ENCODE measurements at regions of chr2 and their contacts with region 1.

Region 1: GRCh38 chr2:112665113-112665780 is 19.5 kb downstream of the SLC20A1 start:
- DNase-seq: no peak
- ATAC-seq: no peak
- H3K4me3 Mint-ChIP-seq: no peak overlapping the region
- H3K27ac Mint-ChIP-seq: peak overlapping the region in 8 of 10 donors; percentile 3 to 84 (median 18)
- H3K4me1 Mint-ChIP-seq: peaks cover 7 to 16% (median 16%) of the 10 kb centered on the region in 4 donors
- H3K27me3 Mint-ChIP-seq: no peaks in the 10 kb centered on the region

Region 2: DNA sequence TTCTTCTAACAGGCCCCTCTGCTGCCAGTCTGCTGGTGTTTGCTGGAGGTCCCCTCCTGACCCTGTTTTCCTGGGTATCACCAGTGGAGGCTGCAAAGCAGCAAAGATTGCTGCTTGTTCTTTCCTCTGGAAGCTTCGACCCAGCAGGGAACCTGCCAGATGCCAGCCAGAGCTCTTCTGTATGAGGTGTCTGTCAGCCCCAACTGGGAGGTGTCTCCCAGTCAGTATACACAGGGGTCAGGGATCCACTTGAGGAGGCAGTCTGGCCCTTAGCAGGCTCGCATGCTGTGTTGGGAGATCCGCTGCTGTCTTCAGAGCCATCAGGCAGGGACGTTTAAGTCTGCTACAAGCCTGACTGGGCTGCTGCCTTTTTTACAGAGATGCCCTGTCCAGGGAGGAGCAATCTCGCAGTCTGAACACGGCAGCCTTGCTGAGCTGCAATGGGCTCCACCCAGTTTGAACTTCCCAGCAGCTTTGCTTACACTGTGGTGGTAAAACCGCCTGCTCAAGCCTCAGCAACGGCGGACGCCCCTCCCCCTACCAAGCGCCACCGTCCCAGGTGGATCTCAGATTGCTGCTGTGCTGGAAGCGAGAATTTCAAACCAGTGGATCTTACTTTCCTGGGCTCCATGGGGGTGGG is 50.9 kb before region 1 on chr2:
- POLR2A ChIA-PET with region 1: no interaction called
- DNase-seq: no peak
- ATAC-seq: no peak
- H3K4me3 Mint-ChIP-seq: no peak overlapping the region
- H3K27ac Mint-ChIP-seq: no peak overlapping the region
- H3K4me1 Mint-ChIP-seq: peaks cover 0 to 3% (median 0%) of the 10 kb centered on the region in 4 donors
- H3K27me3 Mint-ChIP-seq: peaks cover 0 to 4% (median 0%) of the 10 kb centered on the region in 5 donors

Region 3: GRCh38 chr2:112645310-112646101 is 19.7 kb before region 1 on chr2 and contains the start of gene SLC20A1:
- POLR2A ChIA-PET with region 1: interaction called, 10 read pairs
- DNase-seq: peak; percentile 96 to 100 (median 99)
- ATAC-seq: peak; percentile 90
- H3K4me3 Mint-ChIP-seq: peak within 1 kb of the TSS; percentile 86 to 95 (median 92)
- H3K27ac Mint-ChIP-seq: peak within 1 kb of the TSS; percentile 59 to 95 (median 92)
- H3K4me1 Mint-ChIP-seq: peaks cover 35 to 64% (median 61%) of the 10 kb centered on the region in 4 donors
- H3K27me3 Mint-ChIP-seq: no peaks in the 10 kb centered on the region
- polyA plus RNA-seq, gene SLC20A1: 17.0 to 33.7 (median 21.2) TPM

Region 4: DNA sequence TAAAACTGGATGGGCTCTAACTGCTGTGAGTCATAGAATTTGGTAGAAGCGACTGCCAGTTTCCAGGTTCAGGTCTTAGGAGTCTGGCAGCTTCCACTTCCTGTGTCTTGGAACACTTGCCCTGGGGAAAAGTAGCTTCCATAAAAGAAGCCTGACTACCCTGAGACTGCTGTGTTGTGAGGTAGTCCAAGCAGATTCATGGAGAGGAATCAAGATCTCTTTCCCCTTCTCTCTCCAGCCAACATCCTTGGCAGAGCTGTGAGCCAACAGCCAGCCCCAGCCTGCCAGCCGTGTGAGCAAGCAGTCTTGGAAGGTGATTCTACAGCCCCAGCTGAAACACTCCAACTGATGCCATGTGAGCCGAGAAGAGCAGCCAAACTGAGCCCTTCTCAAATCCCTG is 14.2 kb after region 1 on chr2:
- POLR2A ChIA-PET with region 1: no interaction called
- DNase-seq: no peak
- ATAC-seq: no peak
- H3K4me3 Mint-ChIP-seq: no peak overlapping the region
- H3K27ac Mint-ChIP-seq: no peak overlapping the region
- H3K4me1 Mint-ChIP-seq: peaks cover 0 to 9% (median 0%) of the 10 kb centered on the region in 4 donors
- H3K27me3 Mint-ChIP-seq: peaks cover 0 to 7% (median 3%) of the 10 kb centered on the region in 5 donors

Region 5: DNA sequence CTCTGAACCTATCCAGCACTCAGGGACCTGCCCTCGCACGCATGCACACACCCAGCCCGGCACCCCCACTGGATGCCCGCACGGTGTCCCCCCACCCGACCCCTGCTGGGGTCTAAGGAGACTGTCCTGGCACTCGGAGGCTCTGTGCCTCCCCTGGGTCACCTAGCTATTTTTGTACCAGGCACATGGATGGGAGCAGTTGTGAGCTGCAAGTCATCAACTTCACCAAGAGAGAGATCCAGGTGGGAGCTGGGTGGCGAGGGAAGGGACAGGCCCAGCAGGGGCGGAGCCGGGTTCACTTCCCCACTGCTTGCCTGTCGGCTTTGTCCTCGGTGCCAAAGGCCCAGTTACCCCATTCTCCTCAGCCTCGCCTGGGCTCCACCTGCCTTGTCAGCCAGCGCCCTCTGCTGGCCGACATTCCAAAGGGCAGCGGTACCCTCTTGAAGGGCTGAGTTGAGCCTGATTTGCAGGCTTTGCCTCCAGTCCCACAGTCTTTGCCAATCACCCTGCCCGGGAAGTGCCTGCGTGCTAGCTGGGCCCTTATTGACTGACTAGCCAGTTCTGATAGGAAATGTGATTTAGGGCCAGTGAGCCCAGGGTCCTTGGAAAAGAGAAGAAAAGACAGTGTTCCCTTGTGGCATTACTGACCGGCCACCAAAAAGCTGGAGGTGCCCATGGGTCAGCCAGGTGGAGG is 61.4 kb after region 1 on chr2:
- POLR2A ChIA-PET with region 1: no interaction called
- DNase-seq: peak; percentile 73 to 91 (median 84)
- ATAC-seq: peak; percentile 99
- H3K4me3 Mint-ChIP-seq: no peak overlapping the region
- H3K27ac Mint-ChIP-seq: peak overlapping the region in 1 of 10 donors; percentile 43
- H3K4me1 Mint-ChIP-seq: peaks cover 0 to 6% (median 4%) of the 10 kb centered on the region in 4 donors
- H3K27me3 Mint-ChIP-seq: peaks cover 0 to 6% (median 3%) of the 10 kb centered on the region in 5 donors